ENCODE measurements at regions of chr15 and their contacts with region 1.

Region 1: DNA sequence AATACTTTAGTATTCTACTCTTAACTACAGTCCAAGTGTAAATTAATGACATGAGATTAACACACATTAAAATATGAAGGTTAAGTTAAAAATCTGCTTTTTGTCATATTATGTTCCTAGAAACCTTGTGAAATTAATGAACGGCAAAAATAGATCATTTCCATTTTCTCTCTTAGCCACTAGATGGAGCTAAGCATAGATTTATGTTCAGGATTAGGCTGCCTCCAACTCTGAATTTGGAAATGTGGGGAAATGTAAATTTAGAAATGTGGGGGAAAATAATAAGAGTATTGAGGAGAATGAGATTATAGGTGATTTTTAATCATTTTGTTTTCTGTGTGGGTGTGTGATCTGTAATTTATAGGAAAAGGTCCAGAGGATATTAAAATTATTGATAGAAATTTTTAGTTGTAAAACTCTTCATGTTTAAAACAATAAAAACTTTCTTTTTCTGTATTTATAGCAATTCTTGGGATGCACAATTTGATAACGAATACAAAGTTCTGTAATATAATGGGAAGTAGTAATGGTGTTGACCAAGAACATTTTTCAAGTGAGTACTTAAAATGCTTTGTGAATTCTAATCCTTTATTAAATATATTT is 59.2 kb downstream of the TMOD3 start:
- DNase-seq: peak; percentile 37
- CTCF ChIP-seq: peak; percentile 70

Region 2: GRCh38 chr15:51853998-51854397 is 34.7 kb before region 1 on chr15:
- CTCF ChIA-PET with region 1: interaction called, 10 read pairs
- POLR2A ChIA-PET with region 1: no interaction called
- DNase-seq: no peak
- CTCF ChIP-seq: no peak

Region 3: GRCh38 chr15:51907136-51907914 is 18.6 kb after region 1 on chr15:
- CTCF ChIA-PET with region 1: interaction called, 51 read pairs
- POLR2A ChIA-PET with region 1: no interaction called
- DNase-seq: no peak
- CTCF ChIP-seq: no peak

Region 4: DNA sequence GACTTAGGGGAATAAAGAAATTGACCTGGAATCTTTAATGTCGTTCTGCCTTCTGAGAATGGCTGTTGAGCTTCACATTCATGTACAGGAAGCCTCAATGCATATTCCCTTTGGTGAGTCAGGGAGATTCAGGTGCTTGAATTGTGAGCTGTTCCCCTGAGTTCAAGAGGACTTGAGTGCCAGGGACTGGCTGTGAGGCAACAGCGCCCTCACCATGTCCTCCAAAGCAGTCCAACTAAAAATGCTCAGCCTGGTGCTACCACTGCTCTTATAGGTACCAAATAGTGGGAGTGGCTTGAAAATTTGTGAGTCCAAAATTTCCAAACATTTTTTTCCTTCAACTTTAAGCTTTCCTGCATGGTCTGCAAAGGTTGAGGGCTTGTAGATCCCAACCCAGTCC is 28.8 kb after region 1 on chr15:
- CTCF ChIA-PET with region 1: interaction called, 11 read pairs
- POLR2A ChIA-PET with region 1: no interaction called
- DNase-seq: no peak
- CTCF ChIP-seq: peak; percentile 16

Region 5: GRCh38 chr15:52227456-52227855 is 338.8 kb after region 1 on chr15:
- CTCF ChIA-PET with region 1: interaction called, 13 read pairs
- POLR2A ChIA-PET with region 1: no interaction called
- DNase-seq: peak; percentile 79
- CTCF ChIP-seq: peak; percentile 83